H1 (cell line): ENCODE measurements at regions of chr1 and their contacts with region 1.

Region 1: GRCh38 chr1:38727684-38728584 is 131.6 kb downstream of the RRAGC start:
- DNase-seq: peak in 1 of 2 experiments; percentile 58
- H3K4me3 ChIP-seq: peak overlapping the region in 3 of 4 experiments; percentile 15 to 52 (median 21); a peak in 3 of 8 replicates
- H3K27ac ChIP-seq: no peak overlapping the region; the same call in 1 of the 2 replicates
- H3K4me1 ChIP-seq: peaks cover 14 to 27% (median 21%) of the 10 kb centered on the region in 4 experiments
- H3K27me3 ChIP-seq: peaks cover 0 to 3% (median 0%) of the 10 kb centered on the region in 4 experiments; a peak in 1 of 7 replicates
- CTCF ChIP-seq: no peak
- EP300 ChIP-seq: no peak
- POLR2A ChIP-seq: peak in 1 of 2 experiments; percentile 47; a peak in 1 of 3 replicates
- RAD21 ChIP-seq: no peak

Region 2: DNA sequence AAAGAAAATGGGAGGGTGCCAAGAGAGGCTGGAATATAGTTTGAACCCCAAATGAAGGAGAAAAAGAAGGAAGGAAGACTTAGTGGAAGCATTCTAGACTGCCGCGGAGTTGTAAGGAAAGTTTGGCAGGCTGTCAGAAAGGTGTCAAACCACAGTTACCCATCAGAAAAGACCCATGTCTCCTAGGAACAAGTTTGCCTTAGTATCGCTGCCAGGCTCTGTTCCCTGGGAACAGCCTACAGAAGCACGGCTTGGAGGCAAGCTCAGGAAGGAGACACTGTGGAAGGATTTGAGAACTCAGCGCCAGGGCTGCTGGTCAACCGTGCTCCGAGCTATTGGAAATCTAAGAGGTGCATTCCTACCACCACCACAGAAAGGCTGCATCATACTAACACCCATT is 65.8 kb before region 1 on chr1:
- CTCF ChIA-PET with region 1: no interaction called
- POLR2A ChIA-PET with region 1: no interaction called
- DNase-seq: no peak
- H3K4me3 ChIP-seq: no peak overlapping the region
- H3K27ac ChIP-seq: no peak overlapping the region
- H3K4me1 ChIP-seq: no peaks in the 10 kb centered on the region
- H3K27me3 ChIP-seq: no peaks in the 10 kb centered on the region
- CTCF ChIP-seq: no peak
- EP300 ChIP-seq: no peak
- POLR2A ChIP-seq: no peak
- RAD21 ChIP-seq: no peak

Region 3: GRCh38 chr1:38738207-38738606 is 10.3 kb after region 1 on chr1:
- CTCF ChIA-PET with region 1: interaction called, 3 read pairs
- POLR2A ChIA-PET with region 1: interaction called, 10 read pairs
- DNase-seq: no peak
- H3K4me3 ChIP-seq: no peak overlapping the region
- H3K27ac ChIP-seq: no peak overlapping the region
- H3K4me1 ChIP-seq: peaks cover 0 to 4% (median 0%) of the 10 kb centered on the region in 4 experiments; a peak in 2 of 7 replicates
- H3K27me3 ChIP-seq: no peaks in the 10 kb centered on the region
- CTCF ChIP-seq: no peak
- EP300 ChIP-seq: no peak
- POLR2A ChIP-seq: no peak
- RAD21 ChIP-seq: no peak